Dendritic cell treated with granulocyte-macrophage colony-stimulating factor and Interleukin-4, amounts not matched to agents 40 ng/mL and 50 ng/mL, for 4 days (primary cell): ENCODE measurements at regions of chr21 and their contacts with region 1.

Region 1: GRCh38 chr21:33608559-33608958 is 20.1 kb upstream of the DONSON start:
- H3K4me3 Mint-ChIP-seq: no peak overlapping the region
- H3K27ac Mint-ChIP-seq: no peak overlapping the region
- H3K4me1 Mint-ChIP-seq: no peaks in the 10 kb centered on the region
- H3K27me3 Mint-ChIP-seq: no peaks in the 10 kb centered on the region

Region 2: GRCh38 chr21:33636712-33637111 is 28.2 kb after region 1 on chr21:
- intact Hi-C with region 1: no loop called
- H3K4me3 Mint-ChIP-seq: no peak overlapping the region
- H3K27ac Mint-ChIP-seq: no peak overlapping the region
- H3K4me1 Mint-ChIP-seq: peaks cover 13% of the 10 kb centered on the region
- H3K27me3 Mint-ChIP-seq: no peaks in the 10 kb centered on the region

Region 3: GRCh38 chr21:33894736-33895288 is 286.3 kb after region 1 on chr21:
- intact Hi-C with region 1: loop called (anchors 10 kb)
- H3K4me3 Mint-ChIP-seq: peak overlapping the region; percentile 50
- H3K27ac Mint-ChIP-seq: peak overlapping the region; percentile 14
- H3K4me1 Mint-ChIP-seq: peaks cover 12% of the 10 kb centered on the region
- H3K27me3 Mint-ChIP-seq: peaks cover 12% of the 10 kb centered on the region